Caco-2 (cell line): ENCODE measurements at regions of chr2 and their contacts with region 1.

Region 1: GRCh38 chr2:32010670-32011484 is at the start of gene MEMO1:
- DNase-seq: peak; percentile 95 to 96
- H3K4me3 ChIP-seq: peak within 1 kb of the TSS; percentile 95
- H3K4me3 Mint-ChIP-seq: peak within 1 kb of the TSS; percentile 91
- H3K27ac Mint-ChIP-seq: peak within 1 kb of the TSS; percentile 86
- H3K4me1 ChIP-seq: peaks cover 31% of the 10 kb centered on the region
- H3K4me1 Mint-ChIP-seq: peaks cover 23% of the 10 kb centered on the region
- H3K27me3 ChIP-seq: no peaks in the 10 kb centered on the region
- H3K27me3 Mint-ChIP-seq: no peaks in the 10 kb centered on the region
- CTCF ChIP-seq: no peak
- total RNA-seq, gene MEMO1: 75.9 and 79.0 TPM in 2 replicates

Region 2: GRCh38 chr2:31886697-31887096 is 124.2 kb before region 1 on chr2:
- CTCF ChIA-PET with region 1: no interaction called
- POLR2A ChIA-PET with region 1: no interaction called
- intact Hi-C with region 1: loop called (anchors 2 kb)
- DNase-seq: peak; percentile 52 to 62
- H3K4me3 ChIP-seq: no peak overlapping the region
- H3K4me3 Mint-ChIP-seq: no peak overlapping the region
- H3K27ac Mint-ChIP-seq: no peak overlapping the region
- H3K4me1 ChIP-seq: no peaks in the 10 kb centered on the region
- H3K4me1 Mint-ChIP-seq: no peaks in the 10 kb centered on the region
- H3K27me3 ChIP-seq: no peaks in the 10 kb centered on the region
- H3K27me3 Mint-ChIP-seq: no peaks in the 10 kb centered on the region
- CTCF ChIP-seq: peak; percentile 49 to 86

Region 3: DNA sequence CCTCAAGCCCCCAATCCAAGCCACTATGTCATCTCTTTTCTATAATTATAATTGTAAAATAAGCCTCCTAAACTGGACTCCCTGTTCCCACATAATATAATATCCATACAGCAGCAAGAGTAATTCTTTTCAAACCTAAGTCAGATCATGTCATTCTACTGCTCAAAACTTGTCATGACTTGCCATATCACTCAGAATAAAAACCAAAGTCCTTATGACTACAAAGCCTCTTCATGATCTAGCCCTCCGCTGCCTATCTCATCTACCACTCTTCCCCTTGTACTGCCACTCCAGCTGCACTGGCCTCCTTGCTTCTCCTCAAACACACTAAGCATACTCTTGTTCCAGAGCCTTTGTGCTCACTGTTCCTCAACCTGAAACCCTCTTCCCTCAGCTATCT is 70.0 kb before region 1 on chr2:
- CTCF ChIA-PET with region 1: no interaction called
- POLR2A ChIA-PET with region 1: no interaction called
- intact Hi-C with region 1: no loop called
- DNase-seq: no peak
- H3K4me3 ChIP-seq: no peak overlapping the region
- H3K4me3 Mint-ChIP-seq: no peak overlapping the region
- H3K27ac Mint-ChIP-seq: no peak overlapping the region
- H3K4me1 ChIP-seq: peaks cover 23% of the 10 kb centered on the region
- H3K4me1 Mint-ChIP-seq: peaks cover 24% of the 10 kb centered on the region
- H3K27me3 ChIP-seq: no peaks in the 10 kb centered on the region
- H3K27me3 Mint-ChIP-seq: no peaks in the 10 kb centered on the region
- CTCF ChIP-seq: no peak